B cell (primary cell): ENCODE measurements at regions of chr10 and their contacts with region 1.

Region 1: GRCh38 chr10:27099916-27100812 is at the start of gene ANKRD26:
- DNase-seq: peak; percentile 97
- ATAC-seq: peak; percentile 87
- H3K4me3 ChIP-seq: peak within 1 kb of the TSS; percentile 73 to 92 (median 84)
- H3K4me3 Mint-ChIP-seq: peak within 1 kb of the TSS; percentile 86
- H3K27ac ChIP-seq: peak within 1 kb of the TSS; percentile 81
- H3K27ac Mint-ChIP-seq: peak within 1 kb of the TSS; percentile 97
- H3K4me1 ChIP-seq: peaks cover 13 to 18% of the 10 kb centered on the region in 2 donors
- H3K4me1 Mint-ChIP-seq: peaks cover 25% of the 10 kb centered on the region
- H3K27me3 ChIP-seq: no peaks in the 10 kb centered on the region
- H3K27me3 Mint-ChIP-seq: no peaks in the 10 kb centered on the region
- CTCF ChIP-seq: no peak
- total RNA-seq, gene ANKRD26: 10.5 and 13.5 TPM in 2 replicates

Region 2: GRCh38 chr10:27504007-27504807 is 404.0 kb after region 1 on chr10 and contains the start of gene RAB18:
- CTCF ChIA-PET with region 1: no interaction called
- POLR2A ChIA-PET with region 1: no interaction called
- intact Hi-C with region 1: loop called (anchors 1 kb)
- DNase-seq: peak; percentile 98
- ATAC-seq: peak; percentile 95
- H3K4me3 ChIP-seq: peak within 1 kb of the TSS; percentile 68 to 91 (median 86)
- H3K4me3 Mint-ChIP-seq: peak within 1 kb of the TSS; percentile 100
- H3K27ac ChIP-seq: peak within 1 kb of the TSS; percentile 87 to 88
- H3K27ac Mint-ChIP-seq: peak within 1 kb of the TSS; percentile 100
- H3K4me1 ChIP-seq: peaks cover 13 to 18% of the 10 kb centered on the region in 2 donors
- H3K4me1 Mint-ChIP-seq: peaks cover 41% of the 10 kb centered on the region
- H3K27me3 ChIP-seq: peaks cover 0 to 15% (median 2%) of the 10 kb centered on the region in 4 experiments
- H3K27me3 Mint-ChIP-seq: peaks cover 4% of the 10 kb centered on the region
- CTCF ChIP-seq: no peak
- total RNA-seq, gene RAB18: 56.5 and 60.5 TPM in 2 replicates